Endothelial cell of umbilical vein (primary cell): ENCODE measurements at regions of chr11 and their contacts with region 1.

Region 1: GRCh38 chr11:4187055-4187988 is 92.7 kb downstream of the RRM1 start:
- DNase-seq: peak; percentile 83
- H3K4me3 ChIP-seq: peak overlapping the region; percentile 52 to 65 (median 59)
- H3K27ac ChIP-seq: peak overlapping the region; percentile 31
- H3K4me1 ChIP-seq: no peaks in the 10 kb centered on the region
- H3K27me3 ChIP-seq: peaks cover 0 to 3% of the 10 kb centered on the region in 2 experiments
- CTCF ChIP-seq: peak; percentile 83 to 95
- POLR2A ChIP-seq: no peak

Region 2: DNA sequence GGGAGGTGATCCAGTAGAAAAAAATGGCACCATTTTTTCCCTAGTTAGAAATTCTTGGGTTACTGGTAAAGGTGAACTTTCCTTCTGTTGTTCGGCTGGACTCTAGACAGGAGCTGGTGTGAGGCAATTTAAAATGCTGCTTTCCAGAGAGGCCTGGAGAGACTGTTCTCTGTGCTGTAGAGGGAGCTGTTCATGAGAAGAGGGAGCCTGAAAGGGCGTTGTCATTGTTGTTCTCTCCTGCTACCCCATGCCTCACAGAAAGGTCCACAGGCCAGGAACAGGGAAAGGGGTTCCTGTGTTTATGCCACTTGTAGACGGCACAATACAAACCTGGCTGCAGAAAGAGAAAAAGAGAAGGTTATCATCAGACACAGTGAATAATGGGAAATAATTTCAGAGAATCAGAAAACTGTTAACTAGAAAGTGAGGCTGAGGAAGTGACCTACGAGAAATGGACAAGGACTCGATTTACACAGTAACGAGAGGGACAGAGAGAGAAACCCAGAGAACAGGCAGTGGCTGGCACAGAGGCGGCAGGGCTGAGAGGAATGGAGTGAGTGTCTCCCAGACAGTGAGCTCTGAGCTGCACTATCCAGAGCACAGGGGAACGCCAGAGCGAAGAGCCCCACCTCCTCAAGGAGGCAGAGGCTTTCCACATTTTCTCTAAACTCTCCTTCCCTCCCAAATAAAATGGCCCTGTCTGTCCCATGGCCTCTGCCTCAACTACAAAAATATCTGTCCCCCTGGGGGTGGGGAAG is 16.5 kb after region 1 on chr11:
- CTCF ChIA-PET with region 1: interaction called, 15 read pairs
- POLR2A ChIA-PET with region 1: no interaction called
- dilution Hi-C with region 1: no loop called
- intact Hi-C with region 1: no loop called
- DNase-seq: no peak
- H3K4me3 ChIP-seq: no peak overlapping the region
- H3K27ac ChIP-seq: no peak overlapping the region
- H3K4me1 ChIP-seq: no peaks in the 10 kb centered on the region
- H3K27me3 ChIP-seq: no peaks in the 10 kb centered on the region
- CTCF ChIP-seq: no peak
- POLR2A ChIP-seq: no peak

Region 3: DNA sequence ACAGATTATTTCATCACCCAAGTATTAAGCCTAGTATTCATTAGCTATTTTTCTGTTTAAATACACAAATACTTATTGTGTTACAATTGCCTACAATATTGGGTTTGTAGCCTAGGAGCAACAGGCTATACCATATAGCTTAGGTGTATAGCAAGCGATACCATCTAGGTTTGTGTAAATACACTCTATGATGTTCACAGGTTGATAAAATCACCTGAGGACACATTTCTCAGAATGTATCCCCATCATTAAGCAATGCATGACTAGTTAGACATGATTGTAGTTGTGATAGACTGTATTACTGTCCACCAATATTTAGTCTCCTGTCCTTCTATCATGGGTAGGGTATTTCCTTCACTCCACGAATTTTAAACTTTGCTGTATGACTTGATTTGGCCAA is 303.5 kb after region 1 on chr11:
- CTCF ChIA-PET with region 1: interaction called, 255 read pairs
- POLR2A ChIA-PET with region 1: no interaction called
- dilution Hi-C with region 1: no loop called
- intact Hi-C with region 1: loop called (anchors 1 kb)
- DNase-seq: no peak
- H3K4me3 ChIP-seq: no peak overlapping the region
- H3K27ac ChIP-seq: no peak overlapping the region
- H3K4me1 ChIP-seq: no peaks in the 10 kb centered on the region
- H3K27me3 ChIP-seq: peaks cover 6 to 24% of the 10 kb centered on the region in 2 experiments
- CTCF ChIP-seq: no peak
- POLR2A ChIP-seq: no peak

Region 4: GRCh38 chr11:4539603-4540219 is 352.4 kb after region 1 on chr11:
- CTCF ChIA-PET with region 1: interaction called, 238 read pairs
- POLR2A ChIA-PET with region 1: no interaction called
- dilution Hi-C with region 1: no loop called
- intact Hi-C with region 1: loop called (anchors 1 kb)
- DNase-seq: peak; percentile 51
- H3K4me3 ChIP-seq: no peak overlapping the region
- H3K27ac ChIP-seq: no peak overlapping the region
- H3K4me1 ChIP-seq: peaks cover 9% of the 10 kb centered on the region
- H3K27me3 ChIP-seq: peaks cover 2% of the 10 kb centered on the region in 2 experiments
- CTCF ChIP-seq: peak; percentile 48 to 79
- POLR2A ChIP-seq: no peak

Region 5: DNA sequence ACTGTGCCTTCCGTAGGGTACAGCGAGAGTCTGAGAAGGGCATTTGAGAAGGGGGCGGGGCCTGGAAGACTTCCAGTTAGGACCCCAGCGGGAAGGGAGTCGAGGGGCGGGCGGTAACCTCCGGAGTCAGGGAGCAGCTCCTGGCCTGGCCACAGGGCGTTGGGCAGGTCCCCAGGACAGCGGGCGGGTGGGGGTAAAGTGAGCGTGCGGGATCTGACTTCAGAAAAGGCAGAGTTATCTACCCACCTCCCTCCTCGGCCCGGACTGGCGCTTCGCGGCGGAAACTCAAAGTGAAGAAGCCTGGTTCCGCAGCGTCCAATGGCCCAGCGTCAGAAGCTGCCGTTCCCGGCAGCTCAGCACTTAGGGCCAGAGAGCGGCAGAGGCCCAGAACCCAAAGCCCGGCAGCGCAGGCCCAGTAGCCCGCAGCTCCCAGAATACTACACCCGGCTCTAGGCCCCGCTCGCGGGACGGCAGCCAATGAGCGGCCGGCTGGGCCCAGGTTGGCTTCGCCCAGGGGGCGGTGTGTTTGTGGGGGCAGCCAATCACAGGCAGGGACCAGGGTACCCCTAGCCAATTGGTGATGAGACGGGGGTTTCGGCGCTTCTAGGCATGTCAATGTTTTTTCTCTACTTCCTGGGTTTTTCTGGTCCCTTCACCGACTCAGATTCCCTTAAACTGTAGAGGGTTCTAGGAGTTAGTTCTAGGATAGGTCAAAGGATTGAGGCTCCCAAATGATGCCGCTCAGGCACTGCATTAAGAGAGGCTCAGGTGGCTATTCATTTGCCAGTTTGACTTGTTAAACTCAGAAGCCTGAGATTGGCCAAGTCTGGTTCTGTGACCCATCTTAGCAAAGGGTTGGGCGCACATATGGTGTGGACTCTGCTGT is 420.7 kb after region 1 on chr11 and contains the start of gene TRIM68:
- CTCF ChIA-PET with region 1: interaction called, 8 read pairs
- POLR2A ChIA-PET with region 1: no interaction called
- dilution Hi-C with region 1: no loop called
- intact Hi-C with region 1: loop called (anchors 2 kb)
- DNase-seq: peak; percentile 95
- H3K4me3 ChIP-seq: peak within 1 kb of the TSS; percentile 59 to 93 (median 88)
- H3K27ac ChIP-seq: peak within 1 kb of the TSS; percentile 83
- H3K4me1 ChIP-seq: peaks cover 10% of the 10 kb centered on the region
- H3K27me3 ChIP-seq: no peaks in the 10 kb centered on the region
- CTCF ChIP-seq: no peak
- POLR2A ChIP-seq: peak; percentile 81
- total RNA-seq, gene TRIM68: 10.6 and 11.3 TPM in 2 replicates

Region 6: DNA sequence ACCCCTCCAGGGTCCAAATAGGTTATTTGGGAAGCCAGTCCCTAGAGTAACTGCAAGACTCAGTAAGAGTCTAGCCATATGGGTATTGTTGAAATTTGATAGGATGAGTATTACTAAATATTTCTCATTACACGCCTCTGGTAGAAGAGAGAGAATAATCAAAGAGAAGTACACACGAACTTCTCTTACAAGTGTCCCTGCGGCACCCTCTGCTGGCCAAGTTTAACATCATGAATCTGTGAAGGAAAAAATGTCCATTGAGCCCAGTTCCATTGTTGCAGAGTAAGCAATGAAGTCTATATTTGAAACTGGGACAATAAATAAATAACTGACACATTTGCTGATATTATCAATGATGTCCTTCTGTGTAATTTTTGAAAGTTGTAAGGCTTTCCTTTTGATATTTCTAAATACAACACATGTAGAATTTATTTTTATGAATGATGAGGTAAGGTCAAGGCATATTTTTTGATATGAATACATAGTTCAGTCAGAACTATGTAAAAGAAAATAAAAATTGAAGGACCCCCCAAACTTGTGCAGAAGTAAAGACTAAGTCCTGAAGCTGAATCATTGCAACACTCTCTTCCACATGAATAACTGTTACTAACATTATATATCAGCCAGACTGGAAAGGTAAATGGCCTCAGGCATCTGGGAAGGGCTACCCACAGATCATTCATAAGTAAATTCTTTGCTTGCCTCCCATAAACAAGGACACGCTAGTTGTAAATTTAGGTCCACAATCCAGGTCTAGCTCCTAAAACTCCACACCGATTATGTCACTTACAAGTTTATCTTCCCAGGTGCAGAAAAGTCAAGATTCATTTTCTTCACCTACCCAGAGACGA is 817.3 kb after region 1 on chr11:
- CTCF ChIA-PET with region 1: interaction called, 12 read pairs
- POLR2A ChIA-PET with region 1: no interaction called
- dilution Hi-C with region 1: no loop called
- intact Hi-C with region 1: loop called (anchors 1 kb)
- DNase-seq: peak; percentile 55
- H3K4me3 ChIP-seq: no peak overlapping the region
- H3K27ac ChIP-seq: no peak overlapping the region
- H3K4me1 ChIP-seq: no peaks in the 10 kb centered on the region
- H3K27me3 ChIP-seq: no peaks in the 10 kb centered on the region
- CTCF ChIP-seq: peak; percentile 27 to 47
- POLR2A ChIP-seq: no peak

Region 7: GRCh38 chr11:5553347-5553746 is 1366.0 kb after region 1 on chr11:
- CTCF ChIA-PET with region 1: no interaction called
- POLR2A ChIA-PET with region 1: no interaction called
- dilution Hi-C with region 1: no loop called
- intact Hi-C with region 1: no loop called
- DNase-seq: no peak
- H3K4me3 ChIP-seq: no peak overlapping the region
- H3K27ac ChIP-seq: no peak overlapping the region
- H3K4me1 ChIP-seq: no peaks in the 10 kb centered on the region
- H3K27me3 ChIP-seq: no peaks in the 10 kb centered on the region
- CTCF ChIP-seq: no peak
- POLR2A ChIP-seq: no peak